CD8-positive, alpha-beta T cell (primary cell): ENCODE measurements at regions of chr1 and their contacts with region 1.

Region 1: DNA sequence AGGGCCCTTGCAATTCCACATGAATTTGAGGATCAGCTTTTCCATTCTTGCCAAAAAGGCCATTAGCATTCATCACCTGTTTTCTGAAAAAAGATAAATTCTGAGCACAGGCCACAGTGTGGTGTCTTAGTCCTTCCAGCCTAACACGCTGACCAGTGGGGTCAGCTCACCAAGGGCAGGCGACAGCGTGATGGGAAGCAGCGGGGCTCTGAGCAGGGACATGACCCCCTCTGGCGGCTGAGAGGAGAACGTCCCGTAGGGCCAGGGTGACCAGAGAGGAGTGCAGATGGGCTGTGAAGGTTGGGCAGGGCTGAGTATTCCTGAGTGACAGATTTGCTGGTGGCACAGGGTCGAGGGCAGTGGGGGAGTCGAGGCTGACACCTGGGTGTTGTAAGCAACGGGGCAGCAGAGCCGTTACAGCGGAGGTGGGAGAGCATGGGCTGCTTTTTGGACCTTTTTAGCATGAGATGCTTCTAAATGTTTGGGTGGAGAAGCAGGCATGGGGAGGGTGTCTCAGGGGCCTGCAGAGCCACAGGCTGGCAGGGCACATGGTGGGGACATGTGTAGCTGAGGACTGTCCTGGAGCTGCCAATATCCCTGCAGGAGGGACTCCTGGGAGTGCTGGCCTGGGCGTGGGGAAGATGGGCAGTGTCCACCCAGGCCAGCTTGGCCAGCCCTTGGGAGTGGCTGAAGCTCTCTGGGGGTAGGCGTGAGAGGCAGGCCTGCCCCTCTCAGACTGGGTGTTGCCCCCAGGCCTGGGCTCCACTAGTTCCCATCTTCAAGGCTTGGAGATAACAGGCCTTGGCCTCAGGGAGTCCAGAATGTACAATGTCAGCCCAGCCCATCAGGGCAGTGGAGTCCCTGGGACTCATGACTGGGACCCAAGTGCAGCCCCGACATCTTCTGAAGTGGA is 8.6 kb upstream of the CALML6 start:
- DNase-seq: peak; percentile 39 to 80 (median 68)
- ATAC-seq: peak; percentile 21
- H3K4me3 ChIP-seq: no peak overlapping the region
- H3K4me3 Mint-ChIP-seq: peak overlapping the region; percentile 54
- H3K27ac ChIP-seq: no peak overlapping the region
- H3K27ac Mint-ChIP-seq: no peak overlapping the region
- H3K4me1 ChIP-seq: peaks cover 10% of the 10 kb centered on the region
- H3K4me1 Mint-ChIP-seq: peaks cover 11% of the 10 kb centered on the region
- H3K27me3 ChIP-seq: peaks cover 0 to 3% of the 10 kb centered on the region in 2 experiments
- H3K27me3 Mint-ChIP-seq: no peaks in the 10 kb centered on the region
- CTCF ChIP-seq: peak; percentile 86

Region 2: DNA sequence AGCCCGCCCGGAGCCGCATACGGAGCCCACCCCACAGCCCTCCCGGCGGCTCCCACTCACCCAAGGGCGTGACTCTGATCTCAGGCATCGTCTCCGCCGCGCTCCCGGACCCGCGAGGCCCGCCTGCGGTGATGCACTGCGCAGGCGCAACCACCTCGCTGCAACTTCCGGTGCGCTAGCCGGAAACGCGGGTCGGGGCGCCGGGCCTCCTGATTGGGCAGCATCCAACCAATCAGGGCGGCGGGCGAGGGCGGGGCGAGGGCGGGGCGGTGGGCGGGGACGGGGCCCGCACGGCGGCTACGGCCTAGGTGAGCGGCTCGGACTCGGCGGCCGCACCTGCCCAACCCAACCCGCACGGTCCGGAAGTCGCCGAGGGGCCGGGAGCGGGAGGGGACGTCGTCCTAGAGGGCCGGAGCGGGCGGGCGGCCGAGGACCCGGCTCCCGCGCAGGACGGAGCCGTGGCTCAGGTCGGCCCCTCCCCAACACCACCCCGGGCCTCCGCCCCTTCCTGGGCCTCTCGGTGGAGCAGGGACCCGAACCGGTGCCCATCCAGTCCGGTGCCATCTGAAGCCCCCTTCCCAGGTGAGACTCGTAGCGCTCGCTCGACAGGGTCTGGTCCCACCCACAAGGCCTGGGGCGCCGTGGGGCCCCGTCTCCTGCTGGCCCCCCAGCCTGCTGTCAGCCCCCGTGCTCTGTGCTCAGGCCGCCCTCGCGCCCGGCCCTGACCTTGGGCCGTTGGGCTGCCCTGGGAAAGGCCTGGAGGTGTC is 581.7 kb before region 1 on chr1 and contains the starts of genes CPTP and INTS11:
- CTCF ChIA-PET with region 1: no interaction called
- POLR2A ChIA-PET with region 1: no interaction called
- intact Hi-C with region 1: no loop called
- DNase-seq: peak; percentile 89 to 98 (median 96)
- ATAC-seq: peak; percentile 86
- H3K4me3 ChIP-seq: peak within 1 kb of the TSS; percentile 60 to 77
- H3K4me3 Mint-ChIP-seq: peak within 1 kb of the TSS; percentile 89
- H3K27ac ChIP-seq: peak within 1 kb of the TSS; percentile 73
- H3K27ac Mint-ChIP-seq: peak within 1 kb of the TSS; percentile 89
- H3K4me1 ChIP-seq: peaks cover 35% of the 10 kb centered on the region
- H3K4me1 Mint-ChIP-seq: peaks cover 35% of the 10 kb centered on the region
- H3K27me3 ChIP-seq: no peaks in the 10 kb centered on the region
- H3K27me3 Mint-ChIP-seq: no peaks in the 10 kb centered on the region
- CTCF ChIP-seq: no peak
- total RNA-seq, gene CPTP: 7.3 to 7.9 TPM
- total RNA-seq, gene INTS11: 139 to 156 TPM

Region 3: GRCh38 chr1:1777950-1778662 is 128.3 kb before region 1 on chr1 and contains the start of gene NADK:
- CTCF ChIA-PET with region 1: interaction called, 24 read pairs
- POLR2A ChIA-PET with region 1: interaction called, 9 read pairs
- intact Hi-C with region 1: loop called in 1 of 2 experiments (anchors 1 kb)
- DNase-seq: peak; percentile 45 to 88 (median 70)
- ATAC-seq: peak; percentile 54
- H3K4me3 ChIP-seq: peak within 1 kb of the TSS; percentile 60 to 64
- H3K4me3 Mint-ChIP-seq: peak within 1 kb of the TSS; percentile 84
- H3K27ac ChIP-seq: peak within 1 kb of the TSS; percentile 56 to 95
- H3K27ac Mint-ChIP-seq: peak within 1 kb of the TSS; percentile 93
- H3K4me1 ChIP-seq: peaks cover 66% of the 10 kb centered on the region
- H3K4me1 Mint-ChIP-seq: peaks cover 63% of the 10 kb centered on the region
- H3K27me3 ChIP-seq: no peaks in the 10 kb centered on the region
- H3K27me3 Mint-ChIP-seq: no peaks in the 10 kb centered on the region
- CTCF ChIP-seq: no peak
- total RNA-seq, gene NADK: 15.4 to 16.7 TPM

Region 4: GRCh38 chr1:1815606-1816281 is 90.7 kb before region 1 on chr1:
- CTCF ChIA-PET with region 1: interaction called, 3 read pairs
- POLR2A ChIA-PET with region 1: no interaction called
- intact Hi-C with region 1: loop called in 1 of 2 experiments (anchors 5 kb)
- DNase-seq: no peak
- ATAC-seq: no peak
- H3K4me3 ChIP-seq: no peak overlapping the region
- H3K4me3 Mint-ChIP-seq: no peak overlapping the region
- H3K27ac ChIP-seq: no peak overlapping the region
- H3K27ac Mint-ChIP-seq: no peak overlapping the region
- H3K4me1 ChIP-seq: no peaks in the 10 kb centered on the region
- H3K4me1 Mint-ChIP-seq: peaks cover 5% of the 10 kb centered on the region
- H3K27me3 ChIP-seq: no peaks in the 10 kb centered on the region
- H3K27me3 Mint-ChIP-seq: no peaks in the 10 kb centered on the region
- CTCF ChIP-seq: no peak

Region 5: GRCh38 chr1:1858382-1859086 is 47.9 kb before region 1 on chr1:
- CTCF ChIA-PET with region 1: interaction called, 4 read pairs
- POLR2A ChIA-PET with region 1: no interaction called
- intact Hi-C with region 1: loop called (anchors 1 to 5 kb)
- DNase-seq: peak in 7 of 9 experiments; percentile 5 to 71 (median 33)
- ATAC-seq: peak; percentile 54
- H3K4me3 ChIP-seq: no peak overlapping the region
- H3K4me3 Mint-ChIP-seq: peak overlapping the region; percentile 29
- H3K27ac ChIP-seq: peak overlapping the region in 1 of 2 experiments; percentile 56
- H3K27ac Mint-ChIP-seq: peak overlapping the region; percentile 66
- H3K4me1 ChIP-seq: peaks cover 62% of the 10 kb centered on the region
- H3K4me1 Mint-ChIP-seq: peaks cover 85% of the 10 kb centered on the region
- H3K27me3 ChIP-seq: no peaks in the 10 kb centered on the region
- H3K27me3 Mint-ChIP-seq: no peaks in the 10 kb centered on the region
- CTCF ChIP-seq: no peak

Region 6: GRCh38 chr1:1919304-1920056 is 13.0 kb after region 1 on chr1:
- CTCF ChIA-PET with region 1: interaction called, 9 read pairs
- POLR2A ChIA-PET with region 1: interaction called, 6 read pairs
- intact Hi-C with region 1: loop called (anchors 1 kb)
- DNase-seq: peak; percentile 97 to 100 (median 99)
- ATAC-seq: peak; percentile 89
- H3K4me3 ChIP-seq: peak overlapping the region; percentile 39 to 74
- H3K4me3 Mint-ChIP-seq: peak overlapping the region; percentile 47
- H3K27ac ChIP-seq: peak overlapping the region in 1 of 2 experiments; percentile 28
- H3K27ac Mint-ChIP-seq: peak overlapping the region; percentile 5
- H3K4me1 ChIP-seq: peaks cover 17% of the 10 kb centered on the region
- H3K4me1 Mint-ChIP-seq: peaks cover 3% of the 10 kb centered on the region
- H3K27me3 ChIP-seq: no peaks in the 10 kb centered on the region
- H3K27me3 Mint-ChIP-seq: no peaks in the 10 kb centered on the region
- CTCF ChIP-seq: no peak